ENCODE measurements at regions of chr21 and their contacts with region 1.

Region 1: DNA sequence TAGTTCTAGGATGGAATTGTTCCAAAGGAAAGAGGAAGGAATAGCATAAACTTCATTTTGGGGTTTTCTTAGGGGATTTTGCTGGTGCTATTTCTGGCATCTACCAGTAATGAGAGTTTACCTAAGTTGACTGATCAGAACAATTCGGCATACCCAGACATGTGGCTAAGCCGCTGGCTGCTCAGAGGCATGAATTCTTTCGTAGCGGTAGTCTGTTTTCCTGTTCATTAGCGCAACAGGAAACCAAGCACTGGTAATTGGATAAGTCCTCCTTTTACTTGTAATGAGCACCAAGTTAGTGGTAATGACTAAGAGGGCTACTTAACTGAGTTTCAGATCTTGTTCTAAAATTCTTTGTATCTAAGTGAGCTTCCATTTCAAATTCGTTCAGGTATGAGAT is 38.6 kb downstream of the C21orf91 start:
- DNase-seq: no peak
- H3K4me3 Mint-ChIP-seq: no peak overlapping the region
- H3K27ac Mint-ChIP-seq: peak overlapping the region; percentile 68
- H3K4me1 Mint-ChIP-seq: peaks cover 80% of the 10 kb centered on the region
- H3K27me3 Mint-ChIP-seq: no peaks in the 10 kb centered on the region

Region 2: DNA sequence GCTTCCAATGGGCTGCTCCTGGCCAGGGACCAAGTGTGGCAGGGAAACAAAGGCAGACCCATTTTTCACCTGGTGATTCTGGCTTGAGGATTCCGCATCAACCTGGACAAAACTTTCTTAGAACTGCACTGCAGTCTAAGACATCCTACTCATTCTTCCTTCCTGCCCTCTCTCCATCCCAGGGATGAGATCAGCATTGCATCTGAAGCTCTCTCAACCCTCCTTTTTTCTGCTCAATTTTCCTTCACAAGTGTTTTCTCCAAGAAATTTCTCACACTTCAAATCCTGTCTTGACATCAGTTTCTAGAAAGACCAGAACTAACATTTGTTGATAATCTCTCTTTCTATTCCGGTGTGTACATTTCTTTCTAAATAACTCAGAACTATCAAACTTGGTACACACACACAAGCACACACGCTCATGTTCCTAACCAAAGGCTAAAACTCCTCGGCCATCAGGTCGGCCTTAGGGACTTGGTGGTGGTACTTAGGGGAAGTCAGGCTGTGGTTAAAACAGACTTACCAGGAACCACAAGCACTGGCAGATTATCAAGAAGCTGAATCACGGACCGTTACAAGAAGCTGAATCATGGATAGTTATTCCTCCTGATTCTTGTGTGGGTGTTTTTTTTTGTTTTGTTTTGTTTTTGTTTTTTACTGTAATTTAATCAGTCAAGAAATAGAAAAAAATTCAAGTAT is 288.7 kb before region 1 on chr21:
- intact Hi-C with region 1: loop called (anchors 5 kb)
- DNase-seq: no peak
- H3K4me3 Mint-ChIP-seq: no peak overlapping the region
- H3K27ac Mint-ChIP-seq: peak overlapping the region; percentile 64
- H3K4me1 Mint-ChIP-seq: peaks cover 32% of the 10 kb centered on the region
- H3K27me3 Mint-ChIP-seq: peaks cover 12% of the 10 kb centered on the region

Region 3: DNA sequence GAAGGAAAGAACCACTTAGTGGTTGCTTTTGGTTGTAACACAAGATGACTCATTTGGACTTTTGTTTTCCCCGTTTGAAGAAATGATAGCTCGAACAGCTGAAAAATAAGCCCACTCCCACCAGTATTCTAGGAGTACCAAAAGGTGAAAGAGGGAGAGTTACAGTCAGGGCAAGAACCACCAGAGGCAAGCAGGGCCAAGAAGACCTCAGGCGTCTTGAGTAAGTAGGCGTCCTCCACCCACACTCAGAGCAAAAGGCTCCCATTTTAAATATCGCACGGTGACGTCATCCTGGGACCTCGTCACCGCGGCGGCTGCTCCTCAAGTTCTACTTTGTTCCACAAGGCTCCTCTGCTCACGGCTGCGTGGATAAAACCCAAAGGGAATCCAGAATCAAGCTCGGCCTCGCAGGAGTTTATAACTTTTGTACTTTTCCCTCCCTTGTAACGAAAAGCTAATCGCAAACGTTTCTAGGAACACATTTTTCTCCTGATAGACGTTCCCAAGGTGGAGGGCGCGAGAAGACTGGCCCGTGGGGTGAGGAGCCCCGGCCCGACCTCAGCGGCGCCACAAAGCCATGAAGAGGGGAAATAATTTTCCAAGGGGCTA is 169.0 kb before region 1 on chr21:
- intact Hi-C with region 1: loop called (anchors 2 kb)
- DNase-seq: peak; percentile 76
- H3K4me3 Mint-ChIP-seq: peak overlapping the region; percentile 92
- H3K27ac Mint-ChIP-seq: peak overlapping the region; percentile 96
- H3K4me1 Mint-ChIP-seq: peaks cover 53% of the 10 kb centered on the region
- H3K27me3 Mint-ChIP-seq: no peaks in the 10 kb centered on the region

Region 4: DNA sequence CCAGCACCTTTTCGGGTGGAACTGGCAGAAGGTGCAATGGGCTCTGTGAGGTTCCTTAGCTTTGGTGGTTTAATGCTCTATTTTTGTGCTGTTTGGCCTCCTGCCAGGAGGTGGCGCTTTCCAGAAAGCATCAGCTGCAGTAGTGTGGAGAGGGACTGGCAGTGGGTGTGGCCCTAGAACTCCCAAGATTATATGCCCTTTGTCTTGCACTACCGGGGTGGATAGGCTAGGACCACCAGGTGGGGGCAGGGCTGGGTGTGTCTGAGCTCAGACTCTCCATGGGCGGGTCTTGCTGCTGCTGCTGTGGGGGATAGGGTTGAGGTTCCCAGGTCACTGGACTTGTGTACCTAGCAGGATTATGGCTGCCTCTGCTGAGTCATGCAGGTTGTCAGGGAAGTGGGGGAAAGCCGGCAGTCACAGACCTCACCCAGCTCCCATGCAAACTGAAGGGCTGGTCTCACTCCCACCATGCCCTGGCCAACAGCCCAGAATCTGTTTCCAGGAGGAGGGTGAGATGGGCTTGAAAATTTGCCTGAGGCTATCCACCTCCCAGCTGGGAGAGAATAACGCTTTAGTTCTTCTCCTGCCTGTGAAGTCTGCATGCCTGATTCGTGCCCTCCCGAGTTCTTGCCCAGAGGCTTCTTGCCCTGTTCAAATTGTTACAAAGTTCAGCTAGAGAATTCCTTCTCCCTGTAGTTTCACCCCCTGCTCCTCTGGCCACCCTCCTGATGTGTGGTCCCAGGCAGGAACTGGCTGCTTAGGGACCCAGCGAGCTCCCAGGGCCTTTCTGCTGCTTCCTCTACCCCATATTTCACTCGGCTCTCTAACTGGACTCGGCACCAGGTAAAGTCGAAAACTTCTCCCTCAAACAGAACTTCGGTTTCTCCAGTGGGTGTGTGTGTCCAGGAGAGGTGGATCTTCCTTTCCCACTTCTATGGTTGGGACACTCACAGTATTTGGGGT is 91.3 kb before region 1 on chr21:
- intact Hi-C with region 1: loop called (anchors 5 kb)
- DNase-seq: peak; percentile 16
- H3K4me3 Mint-ChIP-seq: no peak overlapping the region
- H3K27ac Mint-ChIP-seq: no peak overlapping the region
- H3K4me1 Mint-ChIP-seq: peaks cover 43% of the 10 kb centered on the region
- H3K27me3 Mint-ChIP-seq: peaks cover 22% of the 10 kb centered on the region

Region 5: DNA sequence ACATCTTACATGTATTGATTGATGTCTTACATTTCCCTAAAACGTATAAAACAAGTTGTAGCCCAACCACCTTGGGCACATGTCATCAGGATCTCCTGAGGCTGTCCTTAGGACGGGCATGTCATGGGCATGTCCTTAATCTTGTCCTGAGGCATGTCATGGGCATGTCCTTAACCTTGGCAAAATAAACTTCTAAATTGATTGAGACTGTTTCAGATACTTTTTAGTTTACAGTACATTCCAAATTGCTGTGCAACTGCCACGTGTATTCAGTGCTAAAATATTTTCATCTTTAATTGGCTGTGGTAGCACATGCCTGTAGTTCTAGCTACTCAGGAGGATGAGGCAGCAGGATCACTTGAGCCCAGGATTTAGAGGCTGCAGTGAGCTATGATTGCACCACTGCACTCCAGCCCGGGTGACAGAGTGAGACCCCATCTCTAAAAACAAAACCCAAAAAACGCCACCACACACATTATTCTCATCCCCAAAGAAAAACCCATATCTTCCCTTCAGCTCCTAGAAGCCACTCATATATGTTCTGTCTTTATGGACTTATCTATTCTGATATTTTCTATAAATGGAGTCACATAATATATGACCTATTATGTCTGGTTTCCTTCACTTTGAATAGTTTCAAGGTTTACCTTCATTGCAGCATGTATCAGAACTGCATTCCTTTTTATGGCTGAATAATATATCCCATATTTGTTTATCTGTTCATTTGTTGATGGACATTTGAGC is 71.8 kb before region 1 on chr21:
- intact Hi-C with region 1: loop called (anchors 1 kb)
- DNase-seq: no peak
- H3K4me3 Mint-ChIP-seq: no peak overlapping the region
- H3K27ac Mint-ChIP-seq: no peak overlapping the region
- H3K4me1 Mint-ChIP-seq: peaks cover 28% of the 10 kb centered on the region
- H3K27me3 Mint-ChIP-seq: peaks cover 12% of the 10 kb centered on the region

Region 6: GRCh38 chr21:17793246-17794123 is 12.9 kb after region 1 on chr21:
- intact Hi-C with region 1: loop called (anchors 1 kb)
- DNase-seq: no peak
- H3K4me3 Mint-ChIP-seq: peak overlapping the region; percentile 52
- H3K27ac Mint-ChIP-seq: peak overlapping the region; percentile 76
- H3K4me1 Mint-ChIP-seq: peaks cover 59% of the 10 kb centered on the region
- H3K27me3 Mint-ChIP-seq: no peaks in the 10 kb centered on the region

Region 7: GRCh38 chr21:17819114-17819876 is 38.8 kb after region 1 on chr21 and contains the start of gene C21orf91:
- intact Hi-C with region 1: loop called (anchors 1 kb)
- DNase-seq: peak; percentile 86
- H3K4me3 Mint-ChIP-seq: peak within 1 kb of the TSS; percentile 94
- H3K27ac Mint-ChIP-seq: peak within 1 kb of the TSS; percentile 100
- H3K4me1 Mint-ChIP-seq: peaks cover 35% of the 10 kb centered on the region
- H3K27me3 Mint-ChIP-seq: no peaks in the 10 kb centered on the region
- total RNA-seq, gene C21orf91: 22.5 and 27.0 TPM in 2 replicates